Calu3 (cell line): ENCODE measurements at regions of chr2 and their contacts with region 1.

Region 1: GRCh38 chr2:7773362-7774360 is 856.4 kb downstream of the RNF144A start:
- DNase-seq: peak; percentile 76
- H3K4me3 Mint-ChIP-seq: peak overlapping the region; percentile 17
- H3K27ac Mint-ChIP-seq: peak overlapping the region; percentile 90
- H3K4me1 Mint-ChIP-seq: peaks cover 29% of the 10 kb centered on the region
- H3K27me3 Mint-ChIP-seq: no peaks in the 10 kb centered on the region
- CTCF ChIP-seq: no peak

Region 2: DNA sequence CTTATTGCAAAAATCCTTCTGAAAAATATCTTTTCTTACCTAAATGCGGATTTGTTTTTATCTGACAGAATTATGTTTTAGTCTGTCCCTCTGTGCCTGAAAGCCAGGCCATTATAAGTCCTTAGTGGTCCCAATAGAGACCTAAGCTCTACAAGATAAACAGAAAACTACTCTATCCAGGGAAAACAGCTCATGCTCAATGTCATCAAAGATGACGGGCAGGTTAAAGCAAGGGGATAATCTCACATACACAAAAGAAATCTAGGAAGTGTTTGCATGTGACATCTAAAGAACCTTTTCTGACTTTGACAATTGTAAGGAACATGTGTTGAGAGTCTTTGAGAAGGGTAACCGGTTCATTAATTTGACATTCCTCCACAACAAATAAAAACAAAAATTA is 167.1 kb after region 1 on chr2:
- CTCF ChIA-PET with region 1: no interaction called
- intact Hi-C with region 1: loop called (anchors 2 kb)
- DNase-seq: no peak
- H3K4me3 Mint-ChIP-seq: peak overlapping the region; percentile 49
- H3K27ac Mint-ChIP-seq: peak overlapping the region; percentile 89
- H3K4me1 Mint-ChIP-seq: peaks cover 42% of the 10 kb centered on the region
- H3K27me3 Mint-ChIP-seq: no peaks in the 10 kb centered on the region
- CTCF ChIP-seq: no peak